Activated CD4-positive, alpha-beta memory T cell treated with anti-CD3 and anti-CD28 coated beads, Interleukin-2, amount 10 ng/mL, durations not matched to agents 7 days and 5 days (primary cell): ENCODE measurements at regions of chr14 and their contacts with region 1.

Region 1: GRCh38 chr14:100067971-100068959 is 3.0 kb downstream of the EVL start:
- DNase-seq: peak; percentile 93
- H3K4me3 Mint-ChIP-seq: peak overlapping the region; percentile 86
- H3K27ac Mint-ChIP-seq: peak overlapping the region; percentile 97
- H3K4me1 Mint-ChIP-seq: peaks cover 49% of the 10 kb centered on the region
- H3K27me3 Mint-ChIP-seq: no peaks in the 10 kb centered on the region

Region 2: GRCh38 chr14:100056964-100057795 is 11.1 kb before region 1 on chr14:
- CTCF ChIA-PET with region 1: interaction called, 40 read pairs
- POLR2A ChIA-PET with region 1: interaction called, 1,586 read pairs
- DNase-seq: no peak
- H3K4me3 Mint-ChIP-seq: no peak overlapping the region
- H3K27ac Mint-ChIP-seq: no peak overlapping the region
- H3K4me1 Mint-ChIP-seq: peaks cover 51% of the 10 kb centered on the region
- H3K27me3 Mint-ChIP-seq: no peaks in the 10 kb centered on the region

Region 3: DNA sequence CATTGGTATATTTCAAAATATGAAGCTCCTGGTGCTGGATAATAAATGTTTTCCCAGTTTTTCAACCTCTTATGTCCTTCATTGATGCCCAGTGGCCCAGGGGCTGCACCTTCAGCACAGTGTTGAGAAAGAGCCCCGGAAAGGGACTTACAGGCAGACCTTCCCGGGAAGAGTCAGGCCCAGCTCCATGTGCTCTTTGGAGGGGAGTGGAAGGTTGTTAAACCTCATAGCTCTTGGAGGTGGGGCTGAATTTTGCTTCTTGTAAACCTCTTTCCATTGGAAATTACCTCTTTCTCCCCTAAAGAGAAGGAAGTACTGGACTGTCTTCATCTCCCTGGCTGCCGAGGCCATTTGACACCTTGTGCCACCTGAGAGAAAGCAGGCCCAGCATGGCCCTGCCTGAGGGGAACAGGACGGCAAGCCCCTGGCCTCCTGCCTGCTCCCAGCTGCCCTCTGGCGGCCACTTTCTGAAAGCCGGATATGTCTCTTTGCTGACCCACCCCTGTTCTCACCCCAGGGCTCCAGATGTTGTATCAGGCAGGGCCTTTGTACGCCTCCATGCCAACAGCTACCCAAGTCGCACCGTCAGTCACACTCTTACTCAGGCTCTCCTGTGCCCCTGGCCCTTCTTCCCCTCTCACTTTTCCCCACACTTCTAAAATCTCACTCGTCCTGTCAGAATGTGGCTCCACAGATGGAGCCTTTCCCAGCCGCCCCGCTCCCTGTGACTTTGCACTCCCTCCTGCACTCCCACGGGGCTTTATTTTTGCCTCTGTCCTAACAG is 40.0 kb after region 1 on chr14:
- CTCF ChIA-PET with region 1: interaction called, 563 read pairs
- POLR2A ChIA-PET with region 1: interaction called, 1,586 read pairs
- DNase-seq: peak; percentile 86
- H3K4me3 Mint-ChIP-seq: no peak overlapping the region
- H3K27ac Mint-ChIP-seq: peak overlapping the region; percentile 76
- H3K4me1 Mint-ChIP-seq: peaks cover 70% of the 10 kb centered on the region
- H3K27me3 Mint-ChIP-seq: no peaks in the 10 kb centered on the region

Region 4: GRCh38 chr14:100221533-100222223 is 153.4 kb after region 1 on chr14:
- CTCF ChIA-PET with region 1: interaction called, 4 read pairs
- POLR2A ChIA-PET with region 1: interaction called, 33 read pairs
- DNase-seq: peak; percentile 82
- H3K4me3 Mint-ChIP-seq: no peak overlapping the region
- H3K27ac Mint-ChIP-seq: no peak overlapping the region
- H3K4me1 Mint-ChIP-seq: peaks cover 8% of the 10 kb centered on the region
- H3K27me3 Mint-ChIP-seq: no peaks in the 10 kb centered on the region